ENCODE measurements at regions of chr7 and their contacts with region 1.

Region 1: DNA sequence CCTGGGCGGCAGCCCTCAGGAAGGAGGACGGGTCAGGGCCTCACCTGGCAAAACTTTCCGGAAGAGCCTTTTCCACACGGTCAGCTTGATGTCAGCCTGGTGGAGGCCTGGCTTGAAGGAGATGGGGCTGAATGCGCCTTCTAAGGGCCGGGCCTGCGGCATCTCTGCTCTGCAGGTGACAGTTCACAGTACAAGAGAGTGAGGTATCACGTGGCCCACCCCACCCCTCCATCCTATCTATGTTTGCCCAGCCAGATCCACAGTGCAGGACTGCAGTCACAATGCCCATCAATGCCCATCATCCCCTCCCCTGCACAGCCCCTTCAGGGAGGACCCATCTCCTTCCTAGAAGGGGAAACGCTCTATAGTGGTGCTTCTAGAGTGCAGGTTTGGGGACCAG is 7.9 kb upstream of the NSUN5 start:
- DNase-seq: no peak
- H3K4me3 ChIP-seq: no peak overlapping the region
- H3K27ac ChIP-seq: no peak overlapping the region
- H3K27me3 ChIP-seq: no peaks in the 10 kb centered on the region
- CTCF ChIP-seq: no peak

Region 2: GRCh38 chr7:73451780-73452398 is 135.4 kb after region 1 on chr7:
- intact Hi-C with region 1: loop called in 1 of 2 experiments (anchors 5 kb)
- DNase-seq: peak in 1 of 10 donors; percentile 35
- H3K4me3 ChIP-seq: no peak overlapping the region
- H3K27ac ChIP-seq: peak overlapping the region in 5 of 59 donors; percentile 2 to 60 (median 29)
- H3K27me3 ChIP-seq: no peaks in the 10 kb centered on the region
- CTCF ChIP-seq: peak; percentile 93 to 100 (median 99)

Measured in dorsolateral prefrontal cortex (tissue), 120 donors.